ENCODE measurements at regions of chr5 and their contacts with region 1.

Region 1: DNA sequence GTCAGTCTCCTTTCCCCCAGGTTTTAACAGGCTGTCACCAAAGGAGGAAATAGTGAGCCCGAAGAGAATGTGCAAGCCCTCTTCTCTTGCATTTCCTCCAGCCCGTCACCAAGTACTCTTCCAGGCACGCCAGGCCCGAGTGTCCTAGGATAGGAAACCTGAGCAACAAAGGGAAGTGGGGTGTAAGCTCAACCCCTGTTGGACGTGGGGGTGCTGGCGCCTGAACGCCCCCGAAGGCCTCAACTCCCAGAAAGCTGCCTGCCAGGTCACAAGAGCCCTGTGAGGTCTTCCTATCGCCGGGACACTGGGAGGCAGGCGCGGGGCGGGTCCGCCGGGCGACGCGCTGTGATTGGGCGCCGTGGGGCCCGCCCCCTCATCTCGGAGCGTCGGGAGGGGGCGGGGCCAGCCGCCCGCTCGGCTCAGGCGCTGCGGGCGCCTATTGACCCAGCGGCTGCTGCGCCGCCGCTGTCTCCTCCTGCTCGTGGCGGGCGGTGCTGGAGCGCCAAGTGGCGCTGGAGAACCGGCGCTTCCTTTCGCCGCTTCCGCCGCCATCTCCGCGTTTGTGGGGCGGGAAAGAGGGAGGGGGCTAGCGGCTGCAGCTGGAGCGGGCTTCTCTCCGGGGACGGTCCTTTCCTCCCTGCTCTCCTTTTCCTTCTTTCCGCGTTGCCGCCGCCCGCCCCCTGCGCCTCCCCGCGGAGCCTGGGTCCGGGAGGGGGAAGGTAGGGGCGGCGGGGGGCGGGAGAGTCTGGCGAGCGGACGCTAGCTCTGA is 572 bp upstream of the MAN2A1 start:
- DNase-seq: peak; percentile 49 to 95 (median 72)
- ATAC-seq: peak; percentile 70
- H3K4me3 ChIP-seq: peak overlapping the region; percentile 92
- H3K4me3 Mint-ChIP-seq: peak overlapping the region; percentile 91
- H3K27ac ChIP-seq: peak overlapping the region; percentile 87 to 92
- H3K27ac Mint-ChIP-seq: peak overlapping the region; percentile 84
- H3K4me1 ChIP-seq: peaks cover 20% of the 10 kb centered on the region
- H3K4me1 Mint-ChIP-seq: peaks cover 35% of the 10 kb centered on the region
- H3K27me3 ChIP-seq: no peaks in the 10 kb centered on the region
- H3K27me3 Mint-ChIP-seq: no peaks in the 10 kb centered on the region
- CTCF ChIP-seq: no peak

Region 2: DNA sequence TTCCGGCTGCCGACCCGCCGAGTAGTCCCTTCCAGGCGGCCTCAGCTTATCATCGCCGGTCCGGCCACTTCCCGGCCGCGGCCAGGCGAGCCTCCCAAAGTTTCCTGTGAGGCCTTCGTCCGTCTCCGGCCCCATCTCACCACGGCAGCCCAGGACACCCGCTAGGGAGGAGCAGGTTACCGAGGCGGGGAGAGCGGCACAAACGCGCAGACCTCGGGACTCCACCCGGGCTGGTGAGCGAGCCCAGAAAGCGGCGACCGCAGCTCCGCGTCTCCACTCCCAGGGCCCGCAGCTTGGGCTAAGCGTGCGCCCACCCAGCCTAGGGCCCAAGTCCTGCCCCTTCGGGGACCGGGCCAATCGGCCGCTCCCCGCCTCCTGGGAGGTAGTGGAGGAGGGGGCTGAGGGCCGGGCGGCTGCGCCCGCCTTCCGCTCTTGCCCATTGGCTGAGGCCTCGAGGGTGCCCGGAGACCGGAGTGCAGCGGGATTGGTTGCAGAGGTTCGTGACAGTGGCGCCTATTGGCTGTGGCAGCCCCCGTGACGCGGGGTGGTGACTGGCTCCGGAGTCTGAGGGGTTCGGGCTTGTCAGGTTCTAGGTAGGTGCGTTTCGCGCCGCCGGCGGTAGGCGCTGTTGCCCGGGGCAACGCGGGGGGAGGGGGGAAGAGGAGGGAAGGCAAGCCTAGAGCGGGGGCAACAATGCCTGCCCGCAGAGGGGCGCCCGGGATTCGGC is 940.6 kb before region 1 on chr5:
- CTCF ChIA-PET with region 1: no interaction called
- POLR2A ChIA-PET with region 1: interaction called, 3 read pairs
- intact Hi-C with region 1: loop called (anchors 5 to 10 kb)
- DNase-seq: peak; percentile 92 to 99 (median 96)
- ATAC-seq: peak; percentile 91
- H3K4me3 ChIP-seq: peak overlapping the region; percentile 98
- H3K4me3 Mint-ChIP-seq: peak overlapping the region; percentile 96
- H3K27ac ChIP-seq: peak overlapping the region; percentile 91 to 92
- H3K27ac Mint-ChIP-seq: peak overlapping the region; percentile 91
- H3K4me1 ChIP-seq: peaks cover 18% of the 10 kb centered on the region
- H3K4me1 Mint-ChIP-seq: peaks cover 21% of the 10 kb centered on the region
- H3K27me3 ChIP-seq: peaks cover 0 to 5% of the 10 kb centered on the region in 2 experiments
- H3K27me3 Mint-ChIP-seq: peaks cover 4% of the 10 kb centered on the region
- CTCF ChIP-seq: no peak

Region 3: DNA sequence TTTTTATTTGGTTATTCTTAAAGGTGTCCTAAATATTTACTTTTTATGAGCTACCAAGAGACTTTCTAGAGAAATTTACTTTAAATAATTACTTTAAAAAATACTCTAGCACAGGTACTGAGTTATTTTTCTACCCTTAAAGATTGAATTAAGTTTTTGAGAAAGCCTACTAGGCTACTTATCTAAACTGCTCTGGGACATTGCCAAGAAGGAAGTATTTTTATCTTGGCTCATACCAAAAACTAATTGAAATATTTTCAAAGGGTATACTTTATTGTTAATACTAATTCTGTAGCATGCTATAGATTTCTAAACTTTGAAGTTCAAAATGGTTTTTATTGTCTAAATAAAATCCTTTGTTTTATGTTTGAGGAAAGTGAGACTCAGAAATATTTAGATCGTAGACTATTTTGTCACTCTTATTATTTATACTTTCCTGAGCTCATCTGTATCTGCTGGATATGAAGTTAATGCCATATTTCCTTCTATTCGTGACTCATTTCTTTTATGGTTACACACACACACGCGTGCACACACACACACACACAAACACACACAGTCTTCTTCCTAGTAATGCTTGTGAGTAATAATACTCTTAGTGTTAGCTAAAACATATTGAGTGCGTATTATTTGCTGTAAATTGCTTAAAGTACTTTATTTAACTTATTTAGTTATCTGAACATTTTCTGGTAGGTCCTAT is 90.0 kb after region 1 on chr5:
- CTCF ChIA-PET with region 1: no interaction called
- POLR2A ChIA-PET with region 1: no interaction called
- intact Hi-C with region 1: loop called in 1 of 2 experiments (anchors 5 kb)
- DNase-seq: no peak
- ATAC-seq: no peak
- H3K4me3 ChIP-seq: no peak overlapping the region
- H3K4me3 Mint-ChIP-seq: no peak overlapping the region
- H3K27ac ChIP-seq: no peak overlapping the region
- H3K27ac Mint-ChIP-seq: no peak overlapping the region
- H3K4me1 ChIP-seq: no peaks in the 10 kb centered on the region
- H3K4me1 Mint-ChIP-seq: peaks cover 22% of the 10 kb centered on the region
- H3K27me3 ChIP-seq: no peaks in the 10 kb centered on the region
- H3K27me3 Mint-ChIP-seq: no peaks in the 10 kb centered on the region
- CTCF ChIP-seq: no peak

Region 4: GRCh38 chr5:110054240-110054639 is 365.1 kb after region 1 on chr5:
- CTCF ChIA-PET with region 1: interaction called, 3 read pairs
- POLR2A ChIA-PET with region 1: interaction called, 41 read pairs
- intact Hi-C with region 1: loop called (anchors 1 to 2 kb)
- DNase-seq: peak; percentile 35 to 93 (median 72)
- ATAC-seq: peak; percentile 91
- H3K4me3 ChIP-seq: no peak overlapping the region
- H3K4me3 Mint-ChIP-seq: peak overlapping the region; percentile 28
- H3K27ac ChIP-seq: peak overlapping the region in 1 of 2 donors; percentile 43
- H3K27ac Mint-ChIP-seq: peak overlapping the region; percentile 75
- H3K4me1 ChIP-seq: peaks cover 18% of the 10 kb centered on the region
- H3K4me1 Mint-ChIP-seq: peaks cover 41% of the 10 kb centered on the region
- H3K27me3 ChIP-seq: no peaks in the 10 kb centered on the region
- H3K27me3 Mint-ChIP-seq: no peaks in the 10 kb centered on the region
- CTCF ChIP-seq: peak; percentile 56

Region 5: GRCh38 chr5:110726249-110727024 is 1037.3 kb after region 1 on chr5 and contains the start of gene TMEM232:
- CTCF ChIA-PET with region 1: no interaction called
- POLR2A ChIA-PET with region 1: no interaction called
- intact Hi-C with region 1: loop called in 1 of 2 experiments (anchors 10 kb)
- DNase-seq: peak; percentile 48 to 91 (median 66)
- ATAC-seq: peak; percentile 99
- H3K4me3 ChIP-seq: peak within 1 kb of the TSS; percentile 51
- H3K4me3 Mint-ChIP-seq: peak within 1 kb of the TSS; percentile 93
- H3K27ac ChIP-seq: no peak within 1 kb of the TSS
- H3K27ac Mint-ChIP-seq: peak within 1 kb of the TSS; percentile 52
- H3K4me1 ChIP-seq: peaks cover 4% of the 10 kb centered on the region
- H3K4me1 Mint-ChIP-seq: peaks cover 9% of the 10 kb centered on the region
- H3K27me3 ChIP-seq: no peaks in the 10 kb centered on the region
- H3K27me3 Mint-ChIP-seq: no peaks in the 10 kb centered on the region
- CTCF ChIP-seq: no peak
- total RNA-seq, gene TMEM232: 0.98 to 1.1 TPM